Heart left ventricle (tissue), 16 donors: ENCODE measurements at regions of chr1 and their contacts with region 1.

Region 1: GRCh38 chr1:47745725-47746597 is 251.2 kb downstream of the TRABD2B start:
- DNase-seq: peak in 1 of 5 donors; percentile 62
- ATAC-seq: peak in 2 of 4 donors; percentile 42 to 53
- H3K4me3 ChIP-seq: no peak overlapping the region
- H3K27ac ChIP-seq: no peak overlapping the region
- H3K4me1 ChIP-seq: peaks cover 0 to under 1% (median 0%) of the 10 kb centered on the region in 12 donors
- H3K27me3 ChIP-seq: peaks cover 0 to 4% (median 0%) of the 10 kb centered on the region in 9 donors
- CTCF ChIP-seq: no peak
- POLR2A ChIP-seq: no peak

Region 2: DNA sequence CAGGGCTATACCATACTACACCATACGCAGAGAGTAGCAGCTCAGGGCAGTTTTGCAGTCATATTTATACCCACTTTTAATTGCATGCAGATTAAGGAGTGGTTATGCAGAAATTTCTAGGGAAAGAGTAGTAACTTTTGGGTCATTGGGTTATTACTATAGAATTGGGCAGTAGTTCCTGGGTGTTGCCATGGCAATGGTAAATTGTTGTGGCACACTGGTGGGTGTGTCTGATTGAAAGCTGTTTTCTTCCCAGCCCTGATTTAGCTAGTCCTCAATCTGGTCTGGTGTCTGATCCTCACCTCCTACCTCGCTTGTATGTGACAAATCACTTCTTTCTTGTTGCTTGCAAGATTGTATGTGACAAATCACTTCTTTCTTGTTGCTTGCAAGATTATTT is 835.2 kb before region 1 on chr1:
- intact Hi-C with region 1: no loop called
- DNase-seq: no peak
- ATAC-seq: no peak
- H3K4me3 ChIP-seq: no peak overlapping the region
- H3K27ac ChIP-seq: no peak overlapping the region
- H3K4me1 ChIP-seq: no peaks in the 10 kb centered on the region
- H3K27me3 ChIP-seq: no peaks in the 10 kb centered on the region
- CTCF ChIP-seq: no peak
- POLR2A ChIP-seq: no peak

Region 3: DNA sequence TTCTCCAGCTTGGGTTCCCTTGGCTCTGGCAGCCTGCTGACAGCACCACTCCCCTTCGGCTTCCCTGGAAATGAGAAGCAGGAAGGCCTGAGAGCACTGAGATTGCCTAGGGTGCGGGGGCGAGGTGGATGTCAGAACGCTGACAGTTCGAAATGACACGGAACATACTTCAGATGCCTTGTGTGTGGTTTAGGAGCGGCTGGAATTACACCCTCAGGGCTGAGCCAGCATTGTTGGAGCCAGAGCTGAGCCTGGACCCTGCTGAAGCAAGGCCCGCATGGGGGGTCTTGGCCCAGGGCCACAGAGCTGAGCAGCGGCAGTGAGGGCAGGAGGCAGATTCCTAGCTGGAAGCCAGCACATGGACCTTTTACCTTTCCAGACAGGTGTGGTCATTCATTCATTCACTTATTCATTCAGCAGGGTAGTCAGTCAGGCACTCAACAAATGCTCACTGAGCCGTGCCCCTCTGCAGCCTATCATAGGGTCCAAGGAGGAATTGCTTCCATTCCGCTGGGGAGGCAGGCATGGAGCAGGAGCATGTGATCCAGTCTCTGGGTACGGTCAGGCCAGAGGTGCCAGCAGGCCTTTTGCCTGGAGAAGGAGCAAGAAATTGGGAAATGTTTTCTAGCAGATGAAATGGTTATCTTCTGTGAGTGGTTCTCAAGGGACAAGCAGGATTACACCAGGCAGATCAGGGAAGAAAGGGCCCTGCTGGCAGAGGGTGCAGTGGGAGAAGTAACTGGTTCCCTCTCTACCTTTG is 336.5 kb before region 1 on chr1:
- intact Hi-C with region 1: no loop called
- DNase-seq: no peak
- ATAC-seq: peak in 3 of 4 donors; percentile 22 to 62 (median 49)
- H3K4me3 ChIP-seq: no peak overlapping the region
- H3K27ac ChIP-seq: no peak overlapping the region
- H3K4me1 ChIP-seq: peaks cover 0 to 6% (median 0%) of the 10 kb centered on the region in 12 donors
- H3K27me3 ChIP-seq: peaks cover 0 to 11% (median 2%) of the 10 kb centered on the region in 9 donors
- CTCF ChIP-seq: no peak
- POLR2A ChIP-seq: no peak

Region 4: DNA sequence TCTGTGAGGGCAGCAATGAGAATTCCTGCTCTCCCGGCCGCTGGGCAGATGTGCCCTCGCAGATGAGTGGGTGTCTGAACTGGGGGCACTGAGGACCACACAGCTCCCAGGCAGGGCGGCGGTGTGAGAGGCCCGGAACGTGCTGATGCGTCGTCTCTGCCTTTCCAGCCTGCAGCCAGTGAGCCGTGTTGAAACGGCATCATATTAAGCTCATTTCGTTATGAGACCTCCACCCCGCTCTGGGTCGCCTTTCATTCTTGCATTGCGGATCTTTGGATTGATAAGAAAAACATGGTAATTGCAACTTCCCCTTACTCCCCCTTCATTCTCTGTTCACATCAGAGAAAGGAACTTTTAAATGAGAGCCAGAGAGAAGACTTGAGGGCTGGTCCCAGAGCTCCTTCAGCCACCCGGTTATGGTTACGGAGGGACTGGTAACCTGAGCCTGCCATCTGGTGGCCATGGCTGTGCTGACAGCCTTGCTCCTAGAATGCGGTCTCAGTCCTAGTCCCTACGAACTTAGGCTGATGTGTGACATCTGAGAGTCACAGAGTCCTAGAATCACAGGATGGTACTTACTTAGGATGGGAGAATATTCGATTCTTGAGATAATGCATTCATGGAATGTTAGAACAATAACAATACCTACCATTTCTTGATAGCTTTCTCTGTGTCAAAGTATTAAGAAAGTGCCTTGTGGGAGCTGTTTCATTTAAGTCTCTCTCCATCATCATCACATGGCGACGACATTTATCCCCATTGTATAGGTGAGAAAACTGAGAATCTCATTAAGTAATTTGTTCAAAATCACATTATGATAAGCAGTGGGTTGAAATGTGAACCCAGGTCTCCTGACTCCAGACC is 19.7 kb before region 1 on chr1:
- intact Hi-C with region 1: no loop called
- DNase-seq: peak; percentile 68 to 79 (median 72)
- ATAC-seq: peak; percentile 82 to 93 (median 88)
- H3K4me3 ChIP-seq: peak overlapping the region in 8 of 12 donors; percentile 8 to 35 (median 30)
- H3K27ac ChIP-seq: no peak overlapping the region
- H3K4me1 ChIP-seq: peaks cover 0 to 17% (median 13%) of the 10 kb centered on the region in 12 donors
- H3K27me3 ChIP-seq: peaks cover 15 to 48% (median 28%) of the 10 kb centered on the region in 9 donors
- CTCF ChIP-seq: peak; percentile 80 to 96 (median 84)
- POLR2A ChIP-seq: no peak

Region 5: GRCh38 chr1:47934243-47934805 is 188.4 kb after region 1 on chr1:
- intact Hi-C with region 1: loop called in 1 of 10 experiments (anchors 10 kb)
- DNase-seq: peak; percentile 42 to 72 (median 70)
- ATAC-seq: peak; percentile 37 to 71 (median 52)
- H3K4me3 ChIP-seq: no peak overlapping the region
- H3K27ac ChIP-seq: peak overlapping the region in 2 of 12 donors; percentile 18 to 45
- H3K4me1 ChIP-seq: peaks cover 0 to 33% (median 5%) of the 10 kb centered on the region in 12 donors
- H3K27me3 ChIP-seq: no peaks in the 10 kb centered on the region
- CTCF ChIP-seq: no peak
- POLR2A ChIP-seq: no peak

Region 6: GRCh38 chr1:47986761-47987200 is 240.8 kb after region 1 on chr1:
- intact Hi-C with region 1: loop called in 2 of 10 experiments (anchors 10 kb)
- DNase-seq: peak; percentile 59 to 74 (median 71)
- ATAC-seq: peak; percentile 67 to 88 (median 85)
- H3K4me3 ChIP-seq: peak overlapping the region in 9 of 12 donors; percentile 12 to 35 (median 24)
- H3K27ac ChIP-seq: peak overlapping the region in 11 of 12 donors; percentile 10 to 72 (median 58)
- H3K4me1 ChIP-seq: peaks cover 0 to 48% (median 32%) of the 10 kb centered on the region in 12 donors
- H3K27me3 ChIP-seq: peaks cover 0 to 19% (median 0%) of the 10 kb centered on the region in 9 donors
- CTCF ChIP-seq: no peak
- POLR2A ChIP-seq: no peak

Region 7: GRCh38 chr1:48202030-48202752 is 456.2 kb after region 1 on chr1:
- intact Hi-C with region 1: loop called in 2 of 10 experiments (anchors 10 kb)
- DNase-seq: peak; percentile 47 to 73 (median 62)
- ATAC-seq: peak; percentile 37 to 81 (median 67)
- H3K4me3 ChIP-seq: no peak overlapping the region
- H3K27ac ChIP-seq: no peak overlapping the region
- H3K4me1 ChIP-seq: no peaks in the 10 kb centered on the region
- H3K27me3 ChIP-seq: peaks cover 0 to 6% (median 0%) of the 10 kb centered on the region in 9 donors
- CTCF ChIP-seq: peak; percentile 75 to 88 (median 84)
- POLR2A ChIP-seq: no peak